Activated B cell treated with CpG ODN at 0.5 μM for 24 hours (primary cell): ENCODE measurements at regions of chr4 and their contacts with region 1.

Region 1: DNA sequence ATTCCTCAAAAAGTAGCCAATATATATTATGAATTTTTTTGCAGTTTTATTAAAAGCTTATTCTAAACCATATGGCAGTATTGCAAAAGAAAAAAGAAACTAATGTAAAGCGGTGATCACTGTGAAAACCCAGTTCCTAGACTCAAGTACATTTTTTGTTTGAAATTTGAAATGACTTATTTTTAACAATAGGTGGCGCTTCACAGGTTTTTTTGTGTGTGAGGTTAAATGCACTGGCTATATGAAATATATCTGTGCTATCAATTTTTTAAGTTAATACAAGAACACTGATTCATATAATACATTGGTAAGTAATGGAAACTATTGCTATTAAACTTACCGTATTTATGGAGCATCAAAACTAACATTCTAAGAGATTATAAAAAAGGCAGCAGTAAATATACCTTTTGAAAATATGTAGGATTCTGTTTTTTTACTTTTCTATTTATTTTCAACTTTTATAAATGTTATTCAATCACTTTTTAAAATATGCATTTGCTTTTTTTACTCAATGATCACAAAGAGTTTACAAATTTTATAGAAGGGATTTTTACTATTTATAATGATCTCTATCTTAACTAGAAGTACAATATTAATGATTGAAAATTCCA is 5.6 kb upstream of the SPRY1 start:
- DNase-seq: no peak
- ATAC-seq: no peak
- H3K4me3 Mint-ChIP-seq: no peak overlapping the region
- H3K27ac Mint-ChIP-seq: no peak overlapping the region
- H3K4me1 Mint-ChIP-seq: no peaks in the 10 kb centered on the region
- H3K27me3 Mint-ChIP-seq: no peaks in the 10 kb centered on the region
- CTCF ChIP-seq: no peak

Region 2: DNA sequence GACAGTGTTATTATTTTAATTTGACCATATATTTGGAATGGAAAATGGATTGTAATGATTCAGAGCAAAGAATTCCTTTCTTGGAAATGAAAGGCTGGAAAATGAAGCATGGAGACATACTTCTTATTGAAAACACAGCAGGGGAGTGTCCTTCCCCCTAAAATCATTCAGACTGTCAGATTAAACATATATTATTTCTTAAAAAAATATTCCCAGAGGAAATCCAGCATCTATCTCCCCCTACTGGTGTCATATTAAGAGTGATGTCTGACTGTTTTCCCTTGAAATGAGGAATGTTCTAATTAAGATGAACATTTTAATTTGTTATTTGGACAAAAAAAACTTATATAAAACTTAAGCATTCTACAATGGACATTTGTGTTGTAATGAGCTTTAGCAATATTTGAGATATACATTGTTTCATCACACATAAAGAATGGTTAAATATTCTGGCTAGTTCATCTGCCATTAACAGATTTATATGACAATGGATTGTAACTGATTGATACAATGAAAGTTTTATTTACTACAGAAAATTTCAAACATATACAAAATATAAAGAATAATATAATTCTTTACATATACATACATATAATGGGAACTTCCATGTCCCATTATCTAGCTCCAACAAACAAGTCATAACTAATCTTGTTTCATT is 270.3 kb after region 1 on chr4:
- CTCF ChIA-PET with region 1: interaction called, 5 read pairs
- POLR2A ChIA-PET with region 1: no interaction called
- intact Hi-C with region 1: loop called (anchors 1 kb)
- DNase-seq: no peak
- ATAC-seq: no peak
- H3K4me3 Mint-ChIP-seq: no peak overlapping the region
- H3K27ac Mint-ChIP-seq: no peak overlapping the region
- H3K4me1 Mint-ChIP-seq: peaks cover 12% of the 10 kb centered on the region
- H3K27me3 Mint-ChIP-seq: peaks cover 17% of the 10 kb centered on the region
- CTCF ChIP-seq: no peak

Region 3: GRCh38 chr4:124262211-124263179 is 871.5 kb after region 1 on chr4:
- CTCF ChIA-PET with region 1: no interaction called
- POLR2A ChIA-PET with region 1: no interaction called
- intact Hi-C with region 1: loop called (anchors 1 kb)
- DNase-seq: no peak
- ATAC-seq: peak; percentile 56
- H3K4me3 Mint-ChIP-seq: no peak overlapping the region
- H3K27ac Mint-ChIP-seq: no peak overlapping the region
- H3K4me1 Mint-ChIP-seq: no peaks in the 10 kb centered on the region
- H3K27me3 Mint-ChIP-seq: no peaks in the 10 kb centered on the region
- CTCF ChIP-seq: no peak

Region 4: GRCh38 chr4:124322234-124323065 is 931.5 kb after region 1 on chr4:
- CTCF ChIA-PET with region 1: no interaction called
- POLR2A ChIA-PET with region 1: no interaction called
- intact Hi-C with region 1: loop called (anchors 1 kb)
- DNase-seq: no peak
- ATAC-seq: no peak
- H3K4me3 Mint-ChIP-seq: no peak overlapping the region
- H3K27ac Mint-ChIP-seq: no peak overlapping the region
- H3K4me1 Mint-ChIP-seq: no peaks in the 10 kb centered on the region
- H3K27me3 Mint-ChIP-seq: no peaks in the 10 kb centered on the region
- CTCF ChIP-seq: no peak